AG04449 (cell line): ENCODE measurements at regions of chr13 and their contacts with region 1.

Region 1: DNA sequence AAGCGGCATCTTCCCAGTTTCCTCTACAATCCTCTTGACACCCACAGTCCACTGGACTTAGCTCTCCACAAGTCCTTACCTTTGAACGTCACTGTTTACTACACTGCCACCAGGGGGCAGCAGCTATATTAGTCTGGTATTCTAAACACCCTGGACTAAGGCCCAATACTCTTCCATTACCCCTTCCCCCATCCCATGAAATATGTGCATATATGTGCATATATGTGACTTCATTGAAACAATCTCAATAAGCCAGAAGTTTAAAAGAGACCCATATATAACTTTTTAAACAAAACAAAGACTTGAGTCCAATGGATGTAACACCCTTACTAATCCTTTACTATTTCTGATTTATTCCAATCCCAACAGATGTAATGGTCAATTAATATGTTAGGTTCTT is 15.5 kb downstream of the GGACT start:
- DNase-seq: peak; percentile 34
- H3K4me3 ChIP-seq: no peak overlapping the region
- CTCF ChIP-seq: peak; percentile 53

Region 2: DNA sequence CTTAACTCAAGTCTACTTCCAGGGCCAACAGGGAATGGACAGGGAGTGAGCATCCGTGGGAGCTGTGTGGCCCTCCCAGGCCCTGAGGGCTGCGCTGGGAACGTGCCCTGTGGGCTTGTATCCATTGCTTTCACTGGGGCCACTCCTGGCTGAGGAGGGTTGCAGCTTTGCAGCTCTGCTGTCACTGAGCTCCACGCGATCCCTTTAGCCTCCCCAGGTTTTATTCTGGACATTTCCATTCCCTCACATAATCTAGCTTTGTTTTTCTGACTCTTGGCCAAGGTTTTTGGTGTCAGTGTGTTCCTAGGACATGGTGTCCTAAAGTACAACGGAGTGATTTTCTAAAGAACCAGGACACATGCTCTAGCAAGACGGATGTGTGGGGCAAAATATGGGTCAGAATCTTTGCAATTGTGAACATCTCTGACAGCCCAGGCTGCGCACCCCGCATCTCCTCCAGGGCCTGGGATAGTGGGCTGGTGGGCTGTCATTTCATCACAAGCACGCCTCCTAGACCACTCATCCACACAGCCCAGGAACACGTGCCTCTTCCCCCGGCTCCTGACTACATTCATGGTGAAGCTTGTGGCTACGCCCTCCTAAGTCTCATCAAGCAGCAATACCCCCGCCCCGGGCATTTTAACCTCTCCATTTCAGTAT is 12.5 kb before region 1 on chr13:
- CTCF ChIA-PET with region 1: interaction called, 69 read pairs
- POLR2A ChIA-PET with region 1: no interaction called
- DNase-seq: no peak
- H3K4me3 ChIP-seq: no peak overlapping the region
- CTCF ChIP-seq: no peak

Region 3: DNA sequence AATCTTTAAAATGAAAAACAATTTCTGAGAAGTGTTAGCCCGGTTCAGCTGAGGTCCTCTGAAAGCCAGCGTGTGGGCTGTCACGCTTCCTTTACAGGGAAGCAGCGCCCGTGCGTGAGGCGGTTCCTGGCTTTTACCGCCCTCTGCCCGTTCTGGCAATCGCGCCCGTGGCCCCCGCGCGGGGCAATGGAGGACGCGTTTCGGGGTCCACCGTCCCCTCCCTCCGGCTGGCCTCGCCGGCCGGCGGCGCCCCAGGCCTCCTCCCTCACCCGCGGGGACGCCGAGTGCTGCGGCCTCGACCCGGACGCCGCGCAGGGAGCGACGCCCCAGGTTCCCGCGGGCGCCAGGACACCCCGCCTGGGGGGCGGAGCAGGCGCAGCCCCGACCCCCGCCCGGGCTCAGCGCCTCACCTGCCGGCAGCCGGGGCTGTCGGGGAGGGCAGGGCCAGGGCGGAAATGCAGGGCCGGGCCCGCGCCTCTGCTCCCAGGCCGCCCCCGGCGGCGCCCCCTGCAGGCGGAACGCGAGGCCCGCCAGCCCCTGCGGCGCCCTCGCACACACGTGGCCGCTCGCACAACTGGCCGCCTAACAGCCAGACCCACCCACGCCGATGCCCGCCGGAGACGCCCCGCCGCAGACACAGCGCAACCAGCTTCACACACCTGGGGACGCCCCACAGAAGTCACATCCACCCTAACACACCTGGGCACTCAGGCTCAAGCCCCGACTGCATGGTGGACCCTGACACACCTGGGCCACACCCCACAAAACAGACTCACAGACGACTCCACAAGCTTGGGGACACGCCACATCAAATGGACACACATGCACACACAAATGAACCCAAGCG is 15.4 kb after region 1 on chr13 and contains the start of gene GGACT:
- CTCF ChIA-PET with region 1: interaction called, 56 read pairs
- POLR2A ChIA-PET with region 1: no interaction called
- DNase-seq: no peak
- H3K4me3 ChIP-seq: peak within 1 kb of the TSS; percentile 68
- CTCF ChIP-seq: peak; percentile 69

Region 4: GRCh38 chr13:100751826-100752225 is 178.7 kb after region 1 on chr13:
- CTCF ChIA-PET with region 1: no interaction called
- POLR2A ChIA-PET with region 1: no interaction called
- DNase-seq: no peak
- H3K4me3 ChIP-seq: no peak overlapping the region
- CTCF ChIP-seq: no peak

Region 5: GRCh38 chr13:101098873-101099272 is 525.8 kb after region 1 on chr13:
- CTCF ChIA-PET with region 1: interaction called, 15 read pairs
- POLR2A ChIA-PET with region 1: no interaction called
- DNase-seq: no peak
- H3K4me3 ChIP-seq: no peak overlapping the region
- CTCF ChIP-seq: no peak

Region 6: GRCh38 chr13:101127741-101128353 is 554.7 kb after region 1 on chr13:
- CTCF ChIA-PET with region 1: interaction called, 15 read pairs
- POLR2A ChIA-PET with region 1: no interaction called
- DNase-seq: no peak
- H3K4me3 ChIP-seq: no peak overlapping the region
- CTCF ChIP-seq: peak; percentile 64

Region 7: GRCh38 chr13:101408154-101408553 is 835.0 kb after region 1 on chr13:
- CTCF ChIA-PET with region 1: no interaction called
- POLR2A ChIA-PET with region 1: no interaction called
- DNase-seq: no peak
- H3K4me3 ChIP-seq: no peak overlapping the region
- CTCF ChIP-seq: no peak